IMR-90 (cell line): ENCODE measurements at regions of chr4 and their contacts with region 1.

Region 1: GRCh38 chr4:86043755-86044592 is 315.9 kb downstream of the MAPK10 start:
- DNase-seq: peak; percentile 55
- ATAC-seq: peak; percentile 74
- H3K4me3 ChIP-seq: no peak overlapping the region
- H3K27ac ChIP-seq: no peak overlapping the region
- H3K4me1 ChIP-seq: no peaks in the 10 kb centered on the region
- H3K27me3 ChIP-seq: no peaks in the 10 kb centered on the region
- CTCF ChIP-seq: peak; percentile 67
- POLR2A ChIP-seq: no peak
- RAD21 ChIP-seq: peak; percentile 79

Region 2: DNA sequence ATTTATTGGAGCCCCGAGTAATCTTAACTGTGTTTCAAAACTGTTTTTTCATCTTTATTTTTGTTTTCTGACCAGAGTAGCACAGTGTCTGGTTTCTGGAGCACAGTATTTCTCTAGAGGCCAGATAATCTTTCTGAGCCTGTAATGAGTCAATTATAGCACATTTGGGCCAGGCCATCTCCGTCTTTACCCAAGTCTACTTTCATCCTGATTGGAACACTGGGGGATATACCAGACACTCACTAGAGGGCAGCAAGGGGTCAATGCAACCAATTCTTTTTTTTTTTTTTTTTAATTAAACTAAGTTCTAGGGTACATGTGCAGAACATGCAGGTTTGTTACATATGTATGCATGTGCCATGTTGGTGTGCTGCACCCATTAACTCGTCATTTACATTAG is 287.0 kb before region 1 on chr4:
- CTCF ChIA-PET with region 1: no interaction called
- POLR2A ChIA-PET with region 1: no interaction called
- dilution Hi-C with region 1: no loop called
- in situ Hi-C with region 1: loop called (anchors 10 kb)
- intact Hi-C with region 1: loop called (anchors 2 kb)
- DNase-seq: peak; percentile 62
- ATAC-seq: peak; percentile 87
- H3K4me3 ChIP-seq: no peak overlapping the region
- H3K27ac ChIP-seq: no peak overlapping the region
- H3K4me1 ChIP-seq: peaks cover 10% of the 10 kb centered on the region; the same call in 1 of the 2 replicates
- H3K27me3 ChIP-seq: no peaks in the 10 kb centered on the region
- CTCF ChIP-seq: peak; percentile 64
- POLR2A ChIP-seq: no peak
- RAD21 ChIP-seq: peak; percentile 67

Region 3: GRCh38 chr4:85826060-85826678 is 217.8 kb before region 1 on chr4:
- CTCF ChIA-PET with region 1: no interaction called
- POLR2A ChIA-PET with region 1: no interaction called
- dilution Hi-C with region 1: no loop called
- in situ Hi-C with region 1: no loop called
- intact Hi-C with region 1: loop called (anchors 1 kb)
- DNase-seq: peak; percentile 58
- ATAC-seq: peak; percentile 63
- H3K4me3 ChIP-seq: no peak overlapping the region
- H3K27ac ChIP-seq: no peak overlapping the region
- H3K4me1 ChIP-seq: peaks cover 18% of the 10 kb centered on the region
- H3K27me3 ChIP-seq: no peaks in the 10 kb centered on the region
- CTCF ChIP-seq: 0 out of 2 replicates have a peak, but pooled peaks have one; percentile 21
- POLR2A ChIP-seq: no peak
- RAD21 ChIP-seq: no peak

Region 4: GRCh38 chr4:86117705-86118302 is 73.8 kb after region 1 on chr4:
- CTCF ChIA-PET with region 1: no interaction called
- POLR2A ChIA-PET with region 1: no interaction called
- dilution Hi-C with region 1: no loop called
- in situ Hi-C with region 1: no loop called
- intact Hi-C with region 1: no loop called
- DNase-seq: peak; percentile 84
- ATAC-seq: peak; percentile 60
- H3K4me3 ChIP-seq: no peak overlapping the region
- H3K27ac ChIP-seq: no peak overlapping the region
- H3K4me1 ChIP-seq: no peaks in the 10 kb centered on the region
- H3K27me3 ChIP-seq: no peaks in the 10 kb centered on the region
- CTCF ChIP-seq: no peak
- POLR2A ChIP-seq: no peak
- RAD21 ChIP-seq: no peak